Ascending aorta (tissue), 2 donors: ENCODE measurements at regions of chr10 and their contacts with region 1.

Region 1: DNA sequence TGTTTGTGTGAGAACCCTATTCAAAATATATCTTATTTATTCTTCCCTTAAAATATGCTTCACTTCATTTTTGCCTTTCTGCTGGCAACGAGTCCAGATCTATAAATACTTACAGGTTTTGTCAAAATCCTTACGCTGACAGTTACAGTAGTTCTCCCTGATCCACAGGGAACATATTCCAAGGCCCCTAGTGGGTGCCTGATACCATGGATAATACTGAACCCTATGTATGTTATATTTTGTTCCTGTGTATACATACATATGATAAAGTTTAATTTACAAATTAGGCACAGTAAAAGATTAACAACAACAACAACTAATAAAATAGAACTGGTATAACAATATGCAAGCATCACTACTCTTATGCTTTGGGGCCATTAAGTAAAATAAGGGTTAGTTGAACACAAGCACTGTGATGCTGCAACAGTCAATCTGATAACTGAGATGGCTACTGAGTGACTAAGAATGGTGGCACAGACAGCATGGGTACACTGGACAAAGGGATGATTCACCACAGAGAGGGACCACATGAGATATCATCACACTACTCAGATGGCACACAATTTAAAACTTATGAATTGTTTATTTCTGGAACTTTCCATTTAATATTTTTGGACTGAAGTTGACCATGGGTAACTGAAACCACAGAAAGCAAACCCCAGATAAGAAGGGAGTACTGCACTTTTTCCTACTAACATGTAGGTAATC is 29.4 kb upstream of the PCGF5 start:
- DNase-seq: no peak
- H3K4me3 ChIP-seq: no peak overlapping the region
- H3K27ac ChIP-seq: peak overlapping the region; percentile 59 to 91
- H3K4me1 ChIP-seq: peaks cover 3 to 48% of the 10 kb centered on the region in 2 donors
- H3K27me3 ChIP-seq: no peaks in the 10 kb centered on the region
- CTCF ChIP-seq: no peak

Region 2: GRCh38 chr10:91220194-91220953 is 29.3 kb after region 1 on chr10 and contains the start of gene PCGF5:
- intact Hi-C with region 1: loop called (anchors 2 kb)
- DNase-seq: peak; percentile 60 to 94
- H3K4me3 ChIP-seq: peak within 1 kb of the TSS; percentile 75 to 100
- H3K27ac ChIP-seq: peak within 1 kb of the TSS; percentile 88 to 99
- H3K4me1 ChIP-seq: peaks cover 8 to 29% of the 10 kb centered on the region in 2 donors
- H3K27me3 ChIP-seq: no peaks in the 10 kb centered on the region
- CTCF ChIP-seq: peak; percentile 11 to 53 (median 22)
- total RNA-seq, gene PCGF5: 39.8 TPM